ENCODE measurements at regions of chr1 and their contacts with region 1.

Region 1: GRCh38 chr1:230978491-230979388 is at the starts of genes ARV1 and TTC13:
- DNase-seq: peak; percentile 99
- H3K4me3 ChIP-seq: peak within 1 kb of the TSS; percentile 72 to 96 (median 86)
- H3K27ac ChIP-seq: peak within 1 kb of the TSS; percentile 42
- H3K4me1 ChIP-seq: peaks cover 19% of the 10 kb centered on the region
- H3K27me3 ChIP-seq: no peaks in the 10 kb centered on the region
- CTCF ChIP-seq: peak; percentile 5 to 29
- POLR2A ChIP-seq: peak; percentile 88
- total RNA-seq, gene ARV1: 10.7 and 12.5 TPM in 2 replicates
- total RNA-seq, gene TTC13: 22.2 and 23.9 TPM in 2 replicates

Region 2: DNA sequence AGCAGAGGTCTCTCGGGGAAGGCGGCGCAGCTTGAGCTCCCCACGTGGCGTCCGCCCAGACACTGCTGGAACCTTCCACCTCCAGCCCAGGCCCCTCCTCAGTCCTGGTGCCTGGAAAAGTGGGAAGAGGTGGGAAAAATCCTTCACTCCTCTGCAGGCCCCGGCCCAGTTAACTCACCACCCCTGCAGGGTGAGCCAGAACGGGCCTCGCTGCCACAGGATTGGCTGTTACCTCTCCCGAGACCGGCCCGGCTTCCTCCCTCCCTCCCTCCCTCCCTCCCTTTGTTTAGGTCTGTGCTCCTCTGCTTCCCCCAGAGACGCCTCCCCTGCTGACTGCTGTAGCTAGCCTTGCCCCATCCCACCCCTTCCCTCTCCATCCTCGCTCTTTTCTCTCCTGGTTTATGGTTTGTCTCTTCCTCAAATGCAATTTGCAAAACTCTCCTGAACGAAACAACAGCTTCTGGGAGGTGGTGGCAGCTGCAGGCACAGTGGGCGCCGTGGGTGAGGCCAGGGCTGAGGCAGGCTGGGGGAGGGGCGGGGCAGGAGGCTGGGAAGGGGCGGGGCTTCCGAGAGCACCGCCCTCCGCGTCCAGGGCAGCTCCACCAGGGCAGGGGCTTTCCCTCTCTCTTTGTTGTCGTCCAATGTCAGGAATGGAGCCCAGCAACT is 225.0 kb before region 1 on chr1:
- CTCF ChIA-PET with region 1: no interaction called
- POLR2A ChIA-PET with region 1: no interaction called
- dilution Hi-C with region 1: no loop called
- intact Hi-C with region 1: loop called (anchors 1 kb)
- DNase-seq: peak; percentile 41
- H3K4me3 ChIP-seq: peak overlapping the region in 1 of 3 experiments; percentile 7
- H3K27ac ChIP-seq: no peak overlapping the region
- H3K4me1 ChIP-seq: no peaks in the 10 kb centered on the region
- H3K27me3 ChIP-seq: no peaks in the 10 kb centered on the region
- CTCF ChIP-seq: no peak
- POLR2A ChIP-seq: no peak

Region 3: DNA sequence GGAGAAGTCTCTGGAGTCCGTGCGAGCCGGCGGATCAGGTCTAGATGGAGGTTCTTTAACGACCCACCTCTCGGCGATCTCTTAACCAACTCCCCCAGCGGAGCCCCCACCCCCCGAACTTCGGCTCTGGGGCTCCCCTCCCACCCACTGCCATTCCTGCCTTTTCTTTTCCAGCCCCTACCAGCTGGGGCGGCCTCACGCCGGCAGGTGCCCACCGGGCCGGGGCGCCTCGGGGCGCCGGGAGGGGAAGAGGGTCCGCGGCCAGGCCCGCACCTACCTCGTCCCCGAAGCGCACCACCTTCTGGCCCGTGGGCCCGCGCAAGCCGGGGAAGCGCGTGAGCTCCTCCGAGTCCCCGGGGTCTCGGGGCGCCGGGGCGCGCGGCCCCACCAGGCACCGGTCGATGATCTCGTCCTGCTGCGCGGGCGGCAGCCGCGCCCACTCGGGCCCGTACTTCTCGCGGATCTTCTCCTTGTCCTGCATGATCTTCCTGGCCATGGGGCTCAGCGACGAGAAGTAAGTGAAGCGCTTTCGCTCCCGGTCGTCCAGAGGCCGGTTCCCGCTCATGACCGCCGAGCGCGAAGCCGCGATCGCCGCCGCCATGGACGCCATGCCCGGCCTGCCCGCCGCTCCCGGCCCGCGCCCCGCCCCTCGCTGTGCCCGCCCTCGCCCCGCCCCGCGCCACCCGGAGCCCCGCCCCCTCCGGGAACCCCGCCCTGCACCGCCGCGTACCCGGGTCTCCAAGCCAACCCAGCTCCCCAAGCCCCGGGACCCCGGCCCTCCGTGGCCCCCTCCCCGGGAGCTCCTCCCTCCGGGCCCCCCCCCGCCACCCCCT is 110.6 kb before region 1 on chr1 and contains the start of gene C1orf198:
- CTCF ChIA-PET with region 1: no interaction called
- POLR2A ChIA-PET with region 1: no interaction called
- dilution Hi-C with region 1: no loop called
- intact Hi-C with region 1: loop called (anchors 1 kb)
- DNase-seq: peak; percentile 60
- H3K4me3 ChIP-seq: peak within 1 kb of the TSS; percentile 70 to 93 (median 83)
- H3K27ac ChIP-seq: peak within 1 kb of the TSS; percentile 33
- H3K4me1 ChIP-seq: peaks cover 20% of the 10 kb centered on the region
- H3K27me3 ChIP-seq: no peaks in the 10 kb centered on the region
- CTCF ChIP-seq: no peak
- POLR2A ChIP-seq: peak; percentile 65
- total RNA-seq, gene C1orf198: 27.7 and 29.2 TPM in 2 replicates

Region 4: DNA sequence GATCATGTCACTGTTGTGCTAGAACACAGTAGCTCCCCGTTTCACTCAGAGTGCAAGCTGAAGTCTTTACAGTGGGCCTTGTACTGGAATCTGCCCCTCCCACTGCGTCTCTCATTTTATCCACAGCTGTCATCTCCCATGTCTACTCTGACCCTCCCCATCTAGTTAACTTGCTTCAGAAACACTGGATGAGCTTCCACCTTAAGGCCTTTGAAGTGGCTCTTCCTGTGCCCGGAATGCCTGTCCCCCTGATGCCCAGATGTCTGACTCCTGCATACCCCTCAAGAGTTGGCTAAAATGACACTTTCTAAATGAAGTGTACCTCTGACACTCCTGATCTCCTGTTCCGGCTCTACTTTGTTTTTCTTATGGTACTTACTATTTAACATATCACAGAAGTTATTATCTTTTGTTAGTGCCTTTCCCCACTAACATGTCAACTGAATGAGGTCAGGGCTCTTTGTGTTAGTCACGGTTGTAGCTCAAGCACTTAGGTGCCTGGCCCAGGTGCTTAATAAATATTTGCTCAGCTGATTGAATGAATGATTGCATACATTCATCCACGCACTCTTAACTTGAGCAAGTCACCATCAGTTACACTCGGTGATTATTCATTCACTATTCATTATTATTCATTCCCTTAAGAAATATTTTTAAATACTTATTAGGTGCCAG is 13.5 kb after region 1 on chr1:
- CTCF ChIA-PET with region 1: no interaction called
- POLR2A ChIA-PET with region 1: no interaction called
- dilution Hi-C with region 1: no loop called
- intact Hi-C with region 1: no loop called
- DNase-seq: no peak
- H3K4me3 ChIP-seq: no peak overlapping the region
- H3K27ac ChIP-seq: no peak overlapping the region
- H3K4me1 ChIP-seq: no peaks in the 10 kb centered on the region
- H3K27me3 ChIP-seq: no peaks in the 10 kb centered on the region
- CTCF ChIP-seq: no peak
- POLR2A ChIP-seq: no peak

Region 5: GRCh38 chr1:231040019-231040799 is 61.5 kb after region 1 on chr1 and contains the start of gene FAM89A:
- CTCF ChIA-PET with region 1: no interaction called
- POLR2A ChIA-PET with region 1: no interaction called
- dilution Hi-C with region 1: no loop called
- intact Hi-C with region 1: loop called (anchors 1 kb)
- DNase-seq: no peak
- H3K4me3 ChIP-seq: peak within 1 kb of the TSS; percentile 64 to 84 (median 65)
- H3K27ac ChIP-seq: no peak within 1 kb of the TSS
- H3K4me1 ChIP-seq: peaks cover 16% of the 10 kb centered on the region
- H3K27me3 ChIP-seq: peaks cover 11 to 28% of the 10 kb centered on the region in 2 experiments
- CTCF ChIP-seq: no peak
- POLR2A ChIP-seq: no peak
- total RNA-seq, gene FAM89A: 13.6 and 24.0 TPM in 2 replicates

Region 6: DNA sequence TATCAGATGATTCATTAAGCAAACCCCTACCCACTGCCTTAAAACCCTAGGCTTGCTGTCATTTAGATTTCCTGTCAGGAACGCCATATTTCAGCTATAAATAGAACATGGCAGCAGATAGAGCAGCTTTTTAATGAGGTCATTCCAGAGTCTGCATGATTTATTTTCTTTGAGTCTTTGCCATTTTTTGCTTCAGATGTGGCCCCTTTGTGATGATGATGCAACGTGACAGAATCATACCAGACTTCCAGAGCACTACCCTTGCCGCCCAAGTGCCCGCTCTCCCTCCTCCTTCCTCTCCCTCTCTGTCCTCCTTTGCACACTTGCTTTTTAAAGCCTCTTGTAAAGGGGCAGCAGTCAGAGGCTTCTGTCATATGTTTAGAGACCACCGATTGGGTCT is 127.6 kb after region 1 on chr1:
- CTCF ChIA-PET with region 1: no interaction called
- POLR2A ChIA-PET with region 1: no interaction called
- dilution Hi-C with region 1: no loop called
- intact Hi-C with region 1: loop called (anchors 2 kb)
- DNase-seq: peak; percentile 74
- H3K4me3 ChIP-seq: no peak overlapping the region
- H3K27ac ChIP-seq: no peak overlapping the region
- H3K4me1 ChIP-seq: peaks cover 12% of the 10 kb centered on the region
- H3K27me3 ChIP-seq: peaks cover 5 to 6% of the 10 kb centered on the region in 2 experiments
- CTCF ChIP-seq: no peak
- POLR2A ChIP-seq: no peak

Region 7: DNA sequence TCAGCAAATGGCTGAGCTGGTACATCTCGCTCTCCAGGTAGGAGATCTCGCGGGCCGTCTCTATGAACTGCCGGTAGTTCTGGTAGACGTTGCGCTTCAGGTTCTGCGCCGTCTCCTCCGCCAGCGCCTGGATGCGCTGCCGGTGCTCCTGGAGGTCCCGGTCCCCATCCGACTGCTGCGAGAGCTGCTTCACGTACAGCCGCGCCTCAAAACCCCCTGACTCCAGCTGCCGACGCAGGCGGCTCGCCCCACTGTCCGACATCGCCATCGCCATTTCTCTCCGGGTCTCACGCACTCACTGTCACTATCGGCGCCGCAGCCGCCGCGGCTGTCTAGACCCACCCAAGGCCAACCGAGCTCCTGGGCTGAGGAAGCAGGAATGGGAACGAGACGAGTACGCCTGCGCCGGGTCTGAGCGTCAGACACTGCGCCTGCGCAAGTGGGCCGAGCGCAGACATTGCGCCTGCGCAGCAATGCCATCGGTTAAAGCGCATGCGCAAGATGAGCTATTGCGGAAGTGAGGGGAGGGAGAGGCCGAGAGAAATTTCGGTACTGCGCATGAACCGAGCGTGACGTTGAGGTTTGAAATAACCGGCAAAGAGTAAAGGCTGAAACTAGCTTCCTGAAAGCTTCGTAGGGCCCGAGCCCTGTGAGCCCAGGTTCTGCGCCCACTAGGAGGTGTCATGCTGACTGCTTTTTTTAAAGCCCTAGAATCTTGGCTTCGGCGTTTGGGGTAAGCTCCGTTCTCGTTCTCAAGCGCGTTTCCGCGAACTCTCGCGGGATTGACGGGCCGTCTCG is 358.9 kb after region 1 on chr1 and contains the start of gene EXOC8:
- CTCF ChIA-PET with region 1: no interaction called
- POLR2A ChIA-PET with region 1: no interaction called
- dilution Hi-C with region 1: no loop called
- intact Hi-C with region 1: loop called (anchors 5 kb)
- DNase-seq: peak; percentile 100
- H3K4me3 ChIP-seq: peak within 1 kb of the TSS; percentile 36 to 89 (median 70)
- H3K27ac ChIP-seq: peak within 1 kb of the TSS; percentile 90
- H3K4me1 ChIP-seq: peaks cover 47% of the 10 kb centered on the region
- H3K27me3 ChIP-seq: no peaks in the 10 kb centered on the region
- CTCF ChIP-seq: peak in 1 of 2 donors; percentile 4
- POLR2A ChIP-seq: peak; percentile 77
- total RNA-seq, gene EXOC8: 12.6 and 13.2 TPM in 2 replicates